HepG2 (cell line): ENCODE measurements at regions of chr17 and their contacts with region 1.

Region 1: GRCh38 chr17:13403982-13404946 is 197.5 kb downstream of the HS3ST3A1 start:
- DNase-seq: peak; percentile 84
- ATAC-seq: peak; percentile 99
- H3K4me3 ChIP-seq: peak overlapping the region; percentile 36 to 56 (median 47); a peak in 5 of 6 replicates
- H3K27ac ChIP-seq: peak overlapping the region; percentile 79
- H3K4me1 ChIP-seq: peaks cover 78% of the 10 kb centered on the region
- H3K27me3 ChIP-seq: no peaks in the 10 kb centered on the region
- CTCF ChIP-seq: no peak
- EP300 ChIP-seq: peak in 1 of 2 experiments; percentile 82; a peak in 2 of 4 replicates
- POLR2A ChIP-seq: peak; percentile 24 to 47; a peak in 2 of 4 replicates
- RAD21 ChIP-seq: no peak

Region 2: GRCh38 chr17:13385481-13385911 is 18.8 kb before region 1 on chr17:
- CTCF ChIA-PET with region 1: no interaction called
- POLR2A ChIA-PET with region 1: no interaction called
- in situ Hi-C with region 1: no loop called
- intact Hi-C with region 1: no loop called
- DNase-seq: no peak
- ATAC-seq: no peak
- H3K4me3 ChIP-seq: no peak overlapping the region
- H3K27ac ChIP-seq: no peak overlapping the region
- H3K4me1 ChIP-seq: peaks cover 19% of the 10 kb centered on the region
- H3K27me3 ChIP-seq: no peaks in the 10 kb centered on the region
- CTCF ChIP-seq: no peak
- EP300 ChIP-seq: no peak
- POLR2A ChIP-seq: no peak
- RAD21 ChIP-seq: no peak

Region 3: GRCh38 chr17:13415807-13416416 is 11.6 kb after region 1 on chr17:
- CTCF ChIA-PET with region 1: no interaction called
- POLR2A ChIA-PET with region 1: interaction called, 11 read pairs
- in situ Hi-C with region 1: no loop called
- intact Hi-C with region 1: no loop called
- DNase-seq: peak; percentile 84
- ATAC-seq: peak; percentile 75
- H3K4me3 ChIP-seq: peak overlapping the region in 1 of 3 experiments; percentile 18; a peak in 1 of 6 replicates
- H3K27ac ChIP-seq: peak overlapping the region; percentile 61
- H3K4me1 ChIP-seq: peaks cover 55% of the 10 kb centered on the region
- H3K27me3 ChIP-seq: no peaks in the 10 kb centered on the region
- CTCF ChIP-seq: peak; percentile 33; the same call in 1 of the 2 replicates
- EP300 ChIP-seq: peak in 1 of 2 experiments; percentile 88; a peak in 1 of 4 replicates
- POLR2A ChIP-seq: no peak
- RAD21 ChIP-seq: no peak

Region 4: DNA sequence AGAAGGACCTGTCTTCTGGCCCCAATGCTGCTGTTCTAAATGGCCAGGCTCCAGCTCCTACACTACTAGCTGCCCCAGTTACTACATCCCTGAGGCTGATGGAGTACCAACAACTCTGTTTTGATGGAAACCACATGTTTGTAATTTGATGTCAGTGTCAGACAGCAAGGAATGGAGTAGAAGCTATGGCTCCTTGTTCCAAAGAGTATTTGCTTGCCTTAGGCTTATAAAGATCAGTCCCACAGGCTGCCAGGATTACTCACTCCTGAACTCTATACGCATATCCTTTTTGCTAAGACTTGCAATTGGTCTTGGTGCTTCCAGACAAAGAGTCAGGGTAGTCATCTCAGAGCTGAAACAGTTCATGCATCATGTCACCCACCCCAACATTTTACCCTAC is 57.9 kb after region 1 on chr17:
- CTCF ChIA-PET with region 1: no interaction called
- POLR2A ChIA-PET with region 1: no interaction called
- in situ Hi-C with region 1: no loop called
- intact Hi-C with region 1: loop called (anchors 10 kb)
- DNase-seq: peak; percentile 5
- ATAC-seq: peak; percentile 64
- H3K4me3 ChIP-seq: no peak overlapping the region
- H3K27ac ChIP-seq: peak overlapping the region; percentile 82
- H3K4me1 ChIP-seq: peaks cover 47% of the 10 kb centered on the region
- H3K27me3 ChIP-seq: no peaks in the 10 kb centered on the region
- CTCF ChIP-seq: no peak
- EP300 ChIP-seq: no peak
- POLR2A ChIP-seq: no peak
- RAD21 ChIP-seq: no peak

Region 5: DNA sequence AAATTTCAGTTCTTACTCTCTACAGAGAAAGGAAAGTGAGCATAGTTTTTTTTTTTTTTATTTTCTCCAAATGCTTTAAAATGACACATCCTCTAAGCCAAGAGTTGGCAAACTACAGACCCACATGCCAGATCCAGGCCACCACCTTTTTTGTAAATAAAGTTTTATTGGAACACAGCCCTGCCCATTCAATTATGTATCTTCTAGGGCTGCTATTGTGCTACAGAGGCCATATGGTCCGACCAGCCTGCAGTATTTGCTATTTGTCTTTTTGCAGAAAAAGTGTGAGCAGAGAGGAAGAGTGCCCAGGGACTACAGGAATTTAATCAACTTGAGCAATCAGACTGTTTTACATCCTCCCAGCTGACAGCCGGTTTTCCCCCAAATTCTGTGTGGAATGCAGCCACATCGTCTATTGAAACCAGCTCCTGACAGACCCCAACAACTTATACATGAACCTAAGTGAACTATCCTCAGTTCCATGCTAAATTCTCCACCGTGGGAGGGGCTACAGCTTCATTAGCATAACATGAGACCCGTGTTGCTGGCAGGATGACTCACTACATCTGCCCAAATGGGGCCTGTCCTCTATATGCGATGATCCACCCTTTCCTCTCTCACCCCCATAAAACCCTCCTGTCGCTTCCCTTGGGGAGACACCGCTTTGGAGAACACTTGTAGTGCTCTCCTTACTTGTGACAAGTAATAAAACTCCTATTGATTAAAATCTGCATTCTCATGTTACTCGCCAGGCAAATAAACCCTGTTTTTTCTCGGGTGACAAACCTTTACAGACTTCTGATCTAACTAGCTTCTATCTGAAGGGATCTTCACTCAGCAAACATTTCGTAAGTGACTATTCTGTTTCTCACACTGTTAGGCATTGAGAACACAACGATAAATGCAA is 346.8 kb after region 1 on chr17:
- CTCF ChIA-PET with region 1: no interaction called
- POLR2A ChIA-PET with region 1: no interaction called
- in situ Hi-C with region 1: no loop called
- intact Hi-C with region 1: no loop called
- DNase-seq: no peak
- ATAC-seq: no peak
- H3K4me3 ChIP-seq: no peak overlapping the region
- H3K27ac ChIP-seq: no peak overlapping the region
- H3K4me1 ChIP-seq: no peaks in the 10 kb centered on the region
- H3K27me3 ChIP-seq: peaks cover 0 to 10% of the 10 kb centered on the region in 2 experiments; a peak in 2 of 5 replicates
- CTCF ChIP-seq: no peak
- EP300 ChIP-seq: no peak
- POLR2A ChIP-seq: no peak
- RAD21 ChIP-seq: no peak